ENCODE measurements at regions of chr1 and their contacts with region 1.

Region 1: DNA sequence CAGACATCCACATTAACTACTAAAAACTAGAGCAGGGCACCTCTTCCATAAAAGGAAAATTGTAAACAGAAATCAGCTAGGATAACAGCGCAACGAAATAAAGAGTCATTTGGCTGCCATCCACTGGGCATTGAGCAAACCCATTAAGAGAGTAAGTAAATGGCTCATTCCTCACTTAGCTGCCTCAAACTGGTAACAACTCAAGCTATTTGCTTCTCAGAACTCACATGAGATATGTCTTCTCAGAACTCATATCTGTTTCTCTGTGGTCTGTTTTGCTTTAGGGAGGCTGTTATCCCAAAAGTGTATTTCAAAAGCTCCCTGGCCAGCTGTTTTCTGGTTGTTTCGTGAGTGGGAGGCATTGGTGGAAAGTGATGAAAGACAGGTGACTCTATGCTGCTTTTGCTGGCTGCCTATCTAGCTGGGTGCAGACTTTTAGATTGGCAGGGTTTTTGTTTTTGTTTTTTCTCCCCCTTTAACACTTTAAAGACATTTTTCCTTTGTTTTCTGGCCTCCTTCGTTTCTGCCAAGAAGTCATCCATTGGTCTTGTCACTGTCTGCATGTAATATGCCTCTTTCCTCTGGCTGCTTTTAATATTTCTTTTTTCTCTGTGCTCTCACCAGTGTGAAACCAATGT is 269.2 kb upstream of the RGS18 start:
- DNase-seq: peak; percentile 20 to 90 (median 54)
- ATAC-seq: peak; percentile 97
- H3K4me3 ChIP-seq: no peak overlapping the region
- H3K27ac ChIP-seq: peak overlapping the region; percentile 62
- H3K4me1 ChIP-seq: peaks cover 0 to 5% of the 10 kb centered on the region in 2 experiments; a peak in 2 of 5 replicates
- H3K27me3 ChIP-seq: no peaks in the 10 kb centered on the region
- CTCF ChIP-seq: peak in 2 of 3 experiments; percentile 14 to 43; a peak in 1 of 6 replicates
- EP300 ChIP-seq: peak; percentile 95
- POLR2A ChIP-seq: no peak
- RAD21 ChIP-seq: peak; percentile 47 to 73

Region 2: GRCh38 chr1:191818198-191818597 is 70.9 kb before region 1 on chr1:
- CTCF ChIA-PET with region 1: no interaction called
- POLR2A ChIA-PET with region 1: no interaction called
- in situ Hi-C with region 1: no loop called
- intact Hi-C with region 1: loop called (anchors 2 kb)
- DNase-seq: no peak
- ATAC-seq: no peak; the same call in 2 of the 3 replicates
- H3K4me3 ChIP-seq: no peak overlapping the region
- H3K27ac ChIP-seq: no peak overlapping the region
- H3K4me1 ChIP-seq: peaks cover 0 to 9% of the 10 kb centered on the region in 2 experiments; a peak in 2 of 5 replicates
- H3K27me3 ChIP-seq: no peaks in the 10 kb centered on the region
- CTCF ChIP-seq: no peak
- EP300 ChIP-seq: no peak
- POLR2A ChIP-seq: no peak
- RAD21 ChIP-seq: no peak

Region 3: DNA sequence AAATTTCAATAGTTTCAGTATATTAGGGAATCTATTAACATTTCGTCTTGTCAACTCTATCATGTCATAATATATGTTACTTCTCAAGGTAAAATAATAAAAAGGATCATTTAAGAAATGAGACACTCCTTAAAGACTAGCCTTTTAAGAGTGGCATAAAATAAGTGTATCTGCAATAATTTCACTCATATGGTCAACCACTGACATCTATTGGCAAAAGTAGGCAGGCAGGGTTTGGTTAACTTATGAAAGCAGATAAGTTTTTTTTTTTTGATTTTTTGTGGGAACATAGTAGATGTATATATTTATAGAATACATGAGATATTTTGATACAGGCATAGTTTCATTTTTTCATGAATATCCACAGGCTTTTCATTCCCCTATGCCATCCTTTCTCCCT is 422.2 kb after region 1 on chr1:
- CTCF ChIA-PET with region 1: no interaction called
- POLR2A ChIA-PET with region 1: no interaction called
- in situ Hi-C with region 1: no loop called
- intact Hi-C with region 1: loop called (anchors 5 kb)
- DNase-seq: peak in 2 of 4 experiments; percentile 28 to 56
- ATAC-seq: peak; percentile 72
- H3K4me3 ChIP-seq: no peak overlapping the region
- H3K27ac ChIP-seq: no peak overlapping the region
- H3K4me1 ChIP-seq: no peaks in the 10 kb centered on the region
- H3K27me3 ChIP-seq: no peaks in the 10 kb centered on the region
- CTCF ChIP-seq: peak in 2 of 3 experiments; percentile 45 to 62; a peak in 3 of 6 replicates
- EP300 ChIP-seq: no peak
- POLR2A ChIP-seq: no peak
- RAD21 ChIP-seq: peak; percentile 68 to 82